ENCODE measurements at regions of chr2 and their contacts with region 1.

Region 1: DNA sequence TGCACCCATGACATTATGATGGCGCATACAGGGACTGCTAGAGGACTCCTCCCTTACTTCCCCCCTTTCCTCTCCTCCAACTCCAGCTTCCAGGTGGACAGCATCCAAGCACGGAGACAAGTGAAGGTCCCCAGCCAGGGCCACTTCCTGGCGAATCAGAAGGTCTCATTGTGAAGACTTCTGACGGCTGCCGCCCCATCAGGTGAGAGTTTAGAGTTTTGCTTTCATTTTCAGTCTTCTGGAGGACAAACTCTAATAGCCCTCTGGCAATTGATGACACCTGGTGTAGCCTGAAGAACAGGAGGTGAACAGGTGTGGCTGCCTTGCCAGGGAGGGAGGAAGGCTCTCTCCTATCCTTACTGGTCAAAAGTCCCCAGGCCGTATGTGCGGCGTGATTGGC is 77.3 kb upstream of the KCNH7 start:
- ATAC-seq: no peak
- H3K4me3 ChIP-seq: no peak overlapping the region
- H3K27ac ChIP-seq: no peak overlapping the region
- H3K4me1 ChIP-seq: no peaks in the 10 kb centered on the region

Region 2: DNA sequence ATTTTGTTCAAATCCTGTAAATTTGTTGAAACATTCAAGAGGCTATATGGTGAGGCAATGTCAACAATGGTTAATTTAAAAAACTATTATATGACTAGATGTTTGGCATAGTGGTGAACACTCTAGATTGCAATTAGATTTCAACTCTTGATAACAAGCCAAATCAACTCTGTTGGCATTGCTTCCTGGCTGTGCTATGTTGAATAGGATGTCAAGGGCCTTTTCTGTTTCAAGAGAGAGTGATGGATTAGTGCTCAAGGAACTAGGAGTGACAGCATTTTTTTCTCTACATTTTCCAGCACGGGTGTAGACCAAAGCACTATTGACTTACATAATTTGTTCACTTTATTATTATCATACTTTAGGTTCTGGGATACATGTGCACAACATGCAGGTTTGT is 95.1 kb after region 1 on chr2:
- in situ Hi-C with region 1: no loop called
- ATAC-seq: no peak
- H3K4me3 ChIP-seq: no peak overlapping the region
- H3K27ac ChIP-seq: no peak overlapping the region
- H3K4me1 ChIP-seq: no peaks in the 10 kb centered on the region

Region 3: DNA sequence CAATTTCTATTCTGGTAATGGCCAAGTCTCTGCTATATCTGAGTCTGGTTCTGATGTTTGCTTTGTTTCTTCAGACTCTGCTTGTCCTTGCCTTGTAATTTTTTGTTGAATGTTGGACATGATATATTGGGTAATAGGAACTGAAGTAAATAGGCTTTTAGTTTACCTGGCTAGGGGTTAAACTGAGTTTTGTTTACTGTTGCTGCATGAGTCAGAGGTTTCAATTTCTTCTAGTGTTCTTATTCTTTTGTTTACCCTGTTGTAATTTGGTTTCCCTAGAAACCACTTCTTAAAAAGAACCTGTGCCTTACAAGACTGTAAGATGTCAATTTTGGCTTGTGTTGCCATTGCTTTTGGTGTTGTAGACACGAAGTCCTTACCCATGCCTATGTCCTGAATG is 207.7 kb after region 1 on chr2:
- in situ Hi-C with region 1: loop called in 1 of 9 experiments (anchors 25 kb)
- ATAC-seq: no peak
- H3K4me3 ChIP-seq: no peak overlapping the region
- H3K27ac ChIP-seq: no peak overlapping the region
- H3K4me1 ChIP-seq: no peaks in the 10 kb centered on the region

Measured in motor neuron (in vitro differentiated cells).